Dorsolateral prefrontal cortex (tissue), 120 donors: ENCODE measurements at regions of chr6 and their contacts with region 1.

Region 1: DNA sequence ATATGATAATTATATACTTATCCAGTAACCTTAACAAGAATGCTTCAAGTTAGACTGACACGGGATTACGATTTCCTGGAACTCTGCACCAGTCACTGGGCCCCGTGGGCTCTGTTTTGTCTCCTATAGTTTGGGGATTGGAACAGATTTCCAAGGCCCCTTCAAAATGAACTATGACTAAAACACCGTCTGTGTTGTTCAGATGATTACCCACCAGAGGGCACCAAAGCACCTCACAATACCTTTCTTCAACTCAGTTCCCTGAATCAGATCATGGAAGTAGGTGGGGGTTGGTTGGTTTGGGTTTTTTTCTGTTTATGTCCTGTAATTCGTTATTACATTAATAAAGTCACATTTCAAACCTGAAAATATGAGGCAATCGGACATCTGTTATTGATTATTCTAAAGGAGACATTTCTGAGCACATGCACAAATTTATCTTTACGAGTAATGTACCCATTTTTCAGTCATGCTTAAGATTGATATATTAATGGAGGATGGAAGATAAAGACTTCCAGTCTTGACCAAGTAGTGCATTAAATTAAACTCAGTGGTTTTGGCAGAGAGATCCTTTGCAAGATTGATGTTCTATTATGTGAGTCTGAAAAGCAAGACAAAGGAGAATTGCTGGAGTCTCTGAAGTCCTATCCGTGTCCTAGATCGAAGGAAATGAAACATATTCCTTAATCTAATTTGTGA is 112.0 kb upstream of the COL21A1 start:
- DNase-seq: peak in 8 of 10 donors; percentile 21 to 83 (median 55)
- H3K4me3 ChIP-seq: peak overlapping the region in 2 of 59 donors; percentile 9 to 24
- H3K27ac ChIP-seq: no peak overlapping the region
- H3K27me3 ChIP-seq: no peaks in the 10 kb centered on the region
- CTCF ChIP-seq: peak; percentile 78 to 97 (median 90)

Region 2: GRCh38 chr6:56570413-56571359 is 211.3 kb after region 1 on chr6:
- intact Hi-C with region 1: loop called in 1 of 2 experiments (anchors 5 kb)
- DNase-seq: no peak
- H3K4me3 ChIP-seq: no peak overlapping the region
- H3K27ac ChIP-seq: peak overlapping the region in 20 of 59 donors; percentile 1 to 54 (median 26)
- H3K27me3 ChIP-seq: no peaks in the 10 kb centered on the region
- CTCF ChIP-seq: peak; percentile 42 to 78 (median 64)

Region 3: DNA sequence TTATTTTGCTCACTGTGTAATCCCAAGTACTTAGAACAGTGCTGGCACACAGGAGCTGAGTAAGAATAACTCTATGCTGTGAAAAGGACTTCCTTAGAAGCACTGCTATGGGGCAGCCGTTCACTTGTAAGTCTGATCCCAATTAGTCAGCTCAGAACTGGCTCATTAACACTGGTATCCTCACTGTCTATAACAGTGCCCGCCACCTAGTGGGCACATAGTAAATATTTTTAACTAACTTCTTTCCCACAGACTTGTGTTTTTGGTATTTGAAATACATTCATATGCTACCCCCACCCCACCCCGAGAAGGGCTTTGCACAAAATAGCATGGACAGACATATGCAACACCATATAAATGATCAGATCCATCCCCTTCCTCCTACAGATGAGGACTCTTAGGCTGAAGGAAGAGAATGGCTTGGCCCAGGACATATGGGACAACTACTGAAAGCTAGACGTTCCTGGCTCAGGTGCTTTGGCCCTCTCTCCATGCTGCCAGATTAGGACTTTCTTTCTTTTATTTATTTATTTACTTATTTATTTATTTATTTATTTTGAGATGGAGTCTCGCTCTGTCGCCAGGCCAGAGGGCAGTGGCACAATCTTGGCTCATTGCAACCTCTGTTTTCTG is 236.3 kb after region 1 on chr6:
- intact Hi-C with region 1: loop called (anchors 2 to 5 kb)
- DNase-seq: peak in 5 of 10 donors; percentile 18 to 40 (median 31)
- H3K4me3 ChIP-seq: no peak overlapping the region
- H3K27ac ChIP-seq: peak overlapping the region in 26 of 59 donors; percentile 10 to 68 (median 33)
- H3K27me3 ChIP-seq: no peaks in the 10 kb centered on the region
- CTCF ChIP-seq: peak; percentile 57 to 81 (median 70)